ENCODE measurements at regions of chr1 and their contacts with region 1.

Region 1: GRCh38 chr1:3617806-3618345 is 6.6 kb upstream of the MEGF6 start:
- DNase-seq: no peak
- H3K4me3 ChIP-seq: no peak overlapping the region
- H3K27ac ChIP-seq: no peak overlapping the region
- H3K4me1 ChIP-seq: peaks cover 13% of the 10 kb centered on the region
- H3K27me3 ChIP-seq: no peaks in the 10 kb centered on the region
- CTCF ChIP-seq: no peak
- POLR2A ChIP-seq: no peak

Region 2: DNA sequence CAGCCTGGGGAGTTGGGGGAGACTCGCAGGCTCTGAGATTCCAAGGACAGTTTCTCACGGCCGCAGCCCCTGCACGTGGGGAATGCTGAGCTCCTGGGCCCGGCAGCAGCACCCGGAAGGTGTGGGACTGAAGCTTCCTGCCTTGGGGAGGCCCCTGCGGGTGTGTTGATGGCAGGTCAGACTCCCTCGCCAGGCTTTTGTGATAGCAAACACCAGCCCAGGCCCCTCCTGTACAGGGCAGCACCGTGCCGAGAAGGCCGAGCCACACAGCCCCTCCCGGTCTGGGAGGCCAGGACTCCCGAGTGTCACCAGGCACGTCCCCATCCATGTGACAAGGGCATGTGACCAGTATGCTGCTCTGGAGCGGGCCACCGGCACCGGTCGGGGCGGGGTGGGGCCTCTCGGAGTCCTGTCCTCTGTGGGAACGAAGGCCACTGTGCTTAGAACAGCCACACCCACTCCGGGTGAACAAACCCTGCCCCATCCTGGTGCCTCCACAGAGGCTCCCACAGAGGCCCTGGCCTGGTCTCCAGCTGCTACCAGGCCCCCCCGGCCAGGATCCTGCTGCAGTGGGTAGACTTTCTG is 194.5 kb before region 1 on chr1:
- intact Hi-C with region 1: no loop called
- DNase-seq: no peak
- H3K4me3 ChIP-seq: no peak overlapping the region
- H3K27ac ChIP-seq: no peak overlapping the region
- H3K4me1 ChIP-seq: no peaks in the 10 kb centered on the region
- H3K27me3 ChIP-seq: no peaks in the 10 kb centered on the region
- CTCF ChIP-seq: no peak
- POLR2A ChIP-seq: no peak

Region 3: GRCh38 chr1:3491291-3492246 is 126.3 kb before region 1 on chr1:
- intact Hi-C with region 1: loop called (anchors 2 kb)
- DNase-seq: no peak
- H3K4me3 ChIP-seq: peak overlapping the region in 1 of 2 donors; percentile 23
- H3K27ac ChIP-seq: no peak overlapping the region
- H3K4me1 ChIP-seq: peaks cover 12% of the 10 kb centered on the region
- H3K27me3 ChIP-seq: no peaks in the 10 kb centered on the region
- CTCF ChIP-seq: peak; percentile 96 to 99 (median 98)
- POLR2A ChIP-seq: no peak

Region 4: DNA sequence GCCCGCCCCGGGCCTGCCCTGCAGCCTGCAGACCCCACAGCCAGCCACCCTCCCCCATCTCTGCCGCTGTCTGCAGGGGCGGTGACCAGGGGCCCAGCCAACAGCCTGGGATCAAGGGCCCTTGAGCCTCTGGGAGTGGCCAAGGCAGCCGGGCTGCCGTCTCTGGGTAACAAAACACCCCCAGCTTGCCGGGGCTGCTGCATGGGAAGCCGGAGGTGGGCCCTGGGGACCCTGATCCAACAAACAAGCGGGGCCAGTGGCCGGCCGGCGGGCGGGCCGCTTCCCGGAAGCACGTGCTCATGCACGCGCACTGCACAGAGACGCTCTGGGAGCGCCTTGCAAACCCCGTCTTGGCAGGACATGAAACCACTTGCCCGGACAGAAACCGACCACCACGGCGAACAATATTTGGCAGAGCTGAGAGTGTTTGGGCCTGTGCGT is 19.8 kb before region 1 on chr1:
- intact Hi-C with region 1: no loop called
- DNase-seq: no peak
- H3K4me3 ChIP-seq: no peak overlapping the region
- H3K27ac ChIP-seq: no peak overlapping the region
- H3K4me1 ChIP-seq: peaks cover 15% of the 10 kb centered on the region
- H3K27me3 ChIP-seq: no peaks in the 10 kb centered on the region
- CTCF ChIP-seq: no peak
- POLR2A ChIP-seq: no peak

Measured in vagina (tissue), 2 donors.